CD4-positive, alpha-beta memory T cell (primary cell): ENCODE measurements at regions of chr22 and their contacts with region 1.

Region 1: DNA sequence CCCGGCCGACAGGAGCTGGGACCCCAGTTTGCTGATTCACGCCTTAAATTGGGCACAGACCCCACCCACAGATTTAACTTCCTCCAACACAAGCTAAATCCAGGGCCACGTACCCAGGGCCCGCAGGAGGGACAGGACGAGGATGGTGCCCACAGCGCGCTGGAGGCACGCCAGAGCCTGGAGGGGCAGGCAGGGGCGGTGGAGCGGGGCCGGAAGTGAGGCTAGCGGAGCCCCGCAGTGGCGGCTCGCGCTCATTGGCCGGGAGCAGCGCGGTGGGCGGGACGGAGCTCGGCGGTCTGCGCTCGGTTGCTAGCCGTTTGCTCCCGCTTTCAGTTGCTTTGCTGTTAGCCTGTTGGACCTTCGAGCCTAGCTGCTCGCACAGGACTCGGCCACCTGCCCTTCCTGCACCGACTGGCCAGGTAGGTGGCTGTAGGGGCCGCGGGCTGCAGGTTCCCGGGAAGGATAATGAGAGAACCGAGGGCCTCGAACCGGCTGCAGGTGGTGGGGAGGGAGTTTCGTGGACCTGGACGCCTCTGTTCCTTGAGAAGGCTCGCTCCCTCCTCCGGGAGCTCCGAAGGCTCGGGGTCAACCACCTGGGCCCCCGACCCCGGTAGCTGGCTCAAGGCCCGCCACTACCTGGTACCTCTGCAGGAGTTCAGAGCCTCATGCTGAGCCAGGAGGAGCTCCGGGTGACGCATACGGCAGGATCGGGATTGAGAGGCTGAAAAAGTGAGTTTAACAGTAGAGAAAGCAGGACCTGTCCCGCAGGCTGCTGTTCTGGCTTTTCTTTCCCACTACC is at the start of gene CCDC134:
- DNase-seq: peak; percentile 89 to 93 (median 93)
- H3K4me3 ChIP-seq: peak within 1 kb of the TSS; percentile 91 to 92
- H3K4me3 Mint-ChIP-seq: peak within 1 kb of the TSS; percentile 91 to 98 (median 96)
- H3K27ac ChIP-seq: peak within 1 kb of the TSS; percentile 85
- H3K27ac Mint-ChIP-seq: peak within 1 kb of the TSS; percentile 90 to 99 (median 98)
- H3K4me1 ChIP-seq: peaks cover 37% of the 10 kb centered on the region
- H3K4me1 Mint-ChIP-seq: peaks cover 20 to 53% (median 34%) of the 10 kb centered on the region in 4 donors
- H3K27me3 ChIP-seq: no peaks in the 10 kb centered on the region
- H3K27me3 Mint-ChIP-seq: no peaks in the 10 kb centered on the region
- total RNA-seq, gene CCDC134: 23.2 to 27.8 TPM

Region 2: DNA sequence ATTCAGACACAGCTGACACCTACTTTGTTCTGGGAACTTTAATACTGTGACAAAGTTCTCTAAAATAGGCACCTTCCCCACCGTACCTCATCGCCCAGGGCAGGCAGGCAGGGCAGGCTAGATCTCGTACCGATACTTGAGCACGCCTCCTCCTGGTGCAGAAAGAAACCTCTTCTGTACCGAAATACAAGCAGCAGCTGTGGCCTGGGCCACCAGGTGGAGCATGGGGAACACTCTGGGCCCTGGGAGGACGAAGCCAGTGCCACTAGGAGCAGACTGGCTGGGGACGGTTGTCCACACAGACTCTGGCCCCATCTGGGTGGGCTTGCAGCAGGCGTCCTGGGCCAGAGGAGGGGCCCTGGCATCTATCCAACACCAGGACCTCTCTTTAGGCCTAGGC is 223.7 kb before region 1 on chr22:
- CTCF ChIA-PET with region 1: no interaction called
- POLR2A ChIA-PET with region 1: no interaction called
- intact Hi-C with region 1: no loop called
- DNase-seq: peak in 4 of 5 donors; percentile 9 to 34 (median 21)
- H3K4me3 ChIP-seq: no peak overlapping the region
- H3K4me3 Mint-ChIP-seq: no peak overlapping the region
- H3K27ac ChIP-seq: no peak overlapping the region
- H3K27ac Mint-ChIP-seq: peak overlapping the region in 1 of 7 donors; percentile 37
- H3K4me1 ChIP-seq: no peaks in the 10 kb centered on the region
- H3K4me1 Mint-ChIP-seq: no peaks in the 10 kb centered on the region
- H3K27me3 ChIP-seq: no peaks in the 10 kb centered on the region
- H3K27me3 Mint-ChIP-seq: no peaks in the 10 kb centered on the region

Region 3: GRCh38 chr22:41688365-41689211 is 112.0 kb before region 1 on chr22 and contains the start of gene SNU13:
- CTCF ChIA-PET with region 1: no interaction called
- POLR2A ChIA-PET with region 1: interaction called, 35 read pairs
- intact Hi-C with region 1: no loop called
- DNase-seq: peak; percentile 91 to 95 (median 92)
- H3K4me3 ChIP-seq: peak within 1 kb of the TSS; percentile 75 to 96
- H3K4me3 Mint-ChIP-seq: peak within 1 kb of the TSS; percentile 94 to 99 (median 97)
- H3K27ac ChIP-seq: peak within 1 kb of the TSS; percentile 95
- H3K27ac Mint-ChIP-seq: peak within 1 kb of the TSS; percentile 95 to 99 (median 98)
- H3K4me1 ChIP-seq: peaks cover 37% of the 10 kb centered on the region
- H3K4me1 Mint-ChIP-seq: peaks cover 21 to 48% (median 33%) of the 10 kb centered on the region in 4 donors
- H3K27me3 ChIP-seq: no peaks in the 10 kb centered on the region
- H3K27me3 Mint-ChIP-seq: no peaks in the 10 kb centered on the region
- total RNA-seq, gene SNU13: 123 to 129 TPM

Region 4: DNA sequence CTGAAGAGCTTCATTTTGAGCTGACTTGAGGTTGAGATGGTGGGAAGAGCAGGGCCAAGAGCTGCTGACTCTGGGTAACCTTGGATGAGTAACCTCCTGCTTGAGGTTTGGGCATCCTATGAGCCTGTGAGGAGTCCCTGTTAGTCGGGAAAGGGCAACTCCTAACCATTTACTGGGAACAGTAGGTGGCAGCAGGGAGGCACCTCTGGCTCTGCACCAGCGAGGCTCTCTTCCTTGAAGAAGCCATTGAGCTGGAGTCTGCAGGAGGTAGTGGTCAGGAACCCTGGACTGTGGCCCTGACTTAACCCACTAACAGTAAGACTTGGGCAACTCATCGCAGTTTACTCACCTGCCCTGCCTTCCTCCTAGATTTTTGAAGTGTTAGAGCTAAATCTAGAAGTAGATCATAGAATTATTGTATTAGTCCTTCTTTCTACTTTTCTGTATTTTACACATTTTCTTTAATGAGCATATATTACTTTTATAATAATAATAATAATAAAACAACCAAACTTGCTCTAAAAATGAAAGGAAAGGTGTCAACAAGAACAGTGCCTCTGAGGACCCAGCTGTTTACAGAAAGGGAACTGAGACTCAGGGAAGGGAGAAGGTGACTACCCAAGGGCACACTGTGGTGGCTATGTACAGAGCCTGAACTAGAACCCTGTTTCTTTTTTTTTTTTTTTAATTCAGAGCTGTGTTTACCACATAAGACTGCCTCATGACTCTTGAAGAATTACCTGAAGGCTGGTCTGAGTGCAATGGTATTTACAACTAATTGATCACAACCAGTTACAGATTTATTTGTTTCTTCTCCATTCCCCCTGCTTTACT is 53.8 kb before region 1 on chr22:
- CTCF ChIA-PET with region 1: interaction called, 46 read pairs
- POLR2A ChIA-PET with region 1: interaction called, 25 read pairs
- intact Hi-C with region 1: loop called (anchors 1 kb)
- DNase-seq: peak; percentile 48 to 66 (median 51)
- H3K4me3 ChIP-seq: no peak overlapping the region
- H3K4me3 Mint-ChIP-seq: no peak overlapping the region
- H3K27ac ChIP-seq: no peak overlapping the region
- H3K27ac Mint-ChIP-seq: peak overlapping the region in 1 of 7 donors; percentile 2
- H3K4me1 ChIP-seq: no peaks in the 10 kb centered on the region
- H3K4me1 Mint-ChIP-seq: peaks cover 0 to 5% (median 1%) of the 10 kb centered on the region in 4 donors
- H3K27me3 ChIP-seq: no peaks in the 10 kb centered on the region
- H3K27me3 Mint-ChIP-seq: peaks cover 0 to 2% of the 10 kb centered on the region in 2 donors

Region 5: GRCh38 chr22:41786418-41786817 is 14.1 kb before region 1 on chr22:
- CTCF ChIA-PET with region 1: interaction called, 71 read pairs
- POLR2A ChIA-PET with region 1: interaction called, 584 read pairs
- intact Hi-C with region 1: loop called (anchors 1 kb)
- DNase-seq: no peak
- H3K4me3 ChIP-seq: no peak overlapping the region
- H3K4me3 Mint-ChIP-seq: no peak overlapping the region
- H3K27ac ChIP-seq: no peak overlapping the region
- H3K27ac Mint-ChIP-seq: peak overlapping the region in 2 of 7 donors; percentile 27 to 77
- H3K4me1 ChIP-seq: peaks cover 59% of the 10 kb centered on the region
- H3K4me1 Mint-ChIP-seq: peaks cover 29 to 66% (median 41%) of the 10 kb centered on the region in 4 donors
- H3K27me3 ChIP-seq: no peaks in the 10 kb centered on the region
- H3K27me3 Mint-ChIP-seq: no peaks in the 10 kb centered on the region

Region 6: DNA sequence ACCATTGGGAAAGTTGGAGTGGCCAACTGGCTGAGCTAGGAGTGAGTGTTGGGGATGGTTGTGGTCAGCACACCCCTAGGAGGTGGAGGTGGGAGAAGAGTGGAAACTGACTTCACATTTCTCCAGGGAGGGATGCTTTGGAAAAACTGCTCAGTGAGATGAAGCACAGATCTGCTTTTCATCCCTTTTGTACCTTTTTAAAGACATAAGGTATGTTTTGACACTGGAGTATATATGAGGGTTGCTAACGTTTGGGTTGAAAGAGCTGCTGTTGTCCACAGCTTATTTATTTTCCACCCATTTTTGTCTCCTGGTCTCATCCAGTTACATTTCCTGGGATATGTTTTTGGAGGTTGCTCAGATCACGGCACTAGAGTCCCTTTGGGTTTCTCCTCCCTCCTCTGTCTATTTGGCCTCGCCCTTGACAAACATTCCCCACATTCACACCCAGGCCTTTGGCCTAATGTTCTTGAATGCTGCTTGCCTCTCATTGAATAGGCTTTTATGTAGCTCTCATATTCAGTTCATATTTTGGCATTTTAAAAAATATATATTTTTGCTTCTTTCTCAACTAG is 40.6 kb after region 1 on chr22:
- CTCF ChIA-PET with region 1: no interaction called
- POLR2A ChIA-PET with region 1: interaction called, 98 read pairs
- intact Hi-C with region 1: no loop called
- DNase-seq: no peak
- H3K4me3 ChIP-seq: no peak overlapping the region
- H3K4me3 Mint-ChIP-seq: no peak overlapping the region
- H3K27ac ChIP-seq: no peak overlapping the region
- H3K27ac Mint-ChIP-seq: peak overlapping the region in 2 of 7 donors; percentile 24 to 33
- H3K4me1 ChIP-seq: peaks cover 63% of the 10 kb centered on the region
- H3K4me1 Mint-ChIP-seq: peaks cover 57 to 82% (median 68%) of the 10 kb centered on the region in 4 donors
- H3K27me3 ChIP-seq: no peaks in the 10 kb centered on the region
- H3K27me3 Mint-ChIP-seq: no peaks in the 10 kb centered on the region

Region 7: DNA sequence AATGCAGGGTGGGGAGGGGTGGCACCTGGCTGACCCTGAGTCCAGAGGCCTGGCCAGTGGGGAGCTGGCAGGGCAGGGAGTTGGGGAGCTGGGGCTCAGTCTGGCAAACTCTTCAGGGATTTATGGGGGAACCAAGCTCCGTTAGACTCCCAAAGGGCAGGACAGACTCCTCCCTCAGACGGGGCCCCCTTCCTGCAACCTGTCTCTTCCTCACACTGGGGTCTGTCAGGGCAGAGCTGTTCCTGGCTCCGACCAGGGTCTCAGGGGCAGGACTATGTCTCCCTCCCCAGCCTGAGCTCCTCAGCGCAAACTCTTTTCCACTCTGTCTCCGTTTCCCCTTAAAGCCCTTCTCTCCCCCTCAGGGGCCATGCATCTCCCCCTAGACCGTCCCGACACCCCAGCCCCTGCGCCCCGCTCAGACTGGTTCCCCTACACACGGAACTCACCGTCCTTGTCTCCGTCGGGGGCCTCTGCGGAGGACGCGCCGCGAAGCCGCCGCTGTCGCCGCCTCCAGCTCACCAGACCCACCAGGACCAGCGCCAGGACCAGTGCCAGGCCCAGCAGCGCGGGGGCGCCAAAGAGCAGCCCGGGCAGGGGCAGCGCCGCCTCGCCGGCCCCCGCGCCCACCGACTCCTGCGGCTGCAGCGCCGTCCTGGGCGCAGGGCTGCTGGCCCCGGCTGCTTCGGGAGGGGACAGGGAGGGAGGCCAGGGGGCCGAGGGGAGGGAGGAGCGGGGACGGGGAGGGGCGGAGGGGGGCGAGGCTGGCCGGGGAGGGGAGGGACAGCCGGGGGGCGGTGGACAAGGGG is 125.3 kb after region 1 on chr22:
- CTCF ChIA-PET with region 1: interaction called, 4 read pairs
- POLR2A ChIA-PET with region 1: interaction called, 13 read pairs
- intact Hi-C with region 1: no loop called
- DNase-seq: peak; percentile 73 to 82 (median 77)
- H3K4me3 ChIP-seq: peak overlapping the region in 1 of 2 donors; percentile 43
- H3K4me3 Mint-ChIP-seq: peak overlapping the region; percentile 73 to 87 (median 82)
- H3K27ac ChIP-seq: no peak overlapping the region
- H3K27ac Mint-ChIP-seq: peak overlapping the region; percentile 57 to 83 (median 71)
- H3K4me1 ChIP-seq: peaks cover 15% of the 10 kb centered on the region
- H3K4me1 Mint-ChIP-seq: peaks cover 3 to 25% (median 9%) of the 10 kb centered on the region in 4 donors
- H3K27me3 ChIP-seq: no peaks in the 10 kb centered on the region
- H3K27me3 Mint-ChIP-seq: no peaks in the 10 kb centered on the region

Region 8: DNA sequence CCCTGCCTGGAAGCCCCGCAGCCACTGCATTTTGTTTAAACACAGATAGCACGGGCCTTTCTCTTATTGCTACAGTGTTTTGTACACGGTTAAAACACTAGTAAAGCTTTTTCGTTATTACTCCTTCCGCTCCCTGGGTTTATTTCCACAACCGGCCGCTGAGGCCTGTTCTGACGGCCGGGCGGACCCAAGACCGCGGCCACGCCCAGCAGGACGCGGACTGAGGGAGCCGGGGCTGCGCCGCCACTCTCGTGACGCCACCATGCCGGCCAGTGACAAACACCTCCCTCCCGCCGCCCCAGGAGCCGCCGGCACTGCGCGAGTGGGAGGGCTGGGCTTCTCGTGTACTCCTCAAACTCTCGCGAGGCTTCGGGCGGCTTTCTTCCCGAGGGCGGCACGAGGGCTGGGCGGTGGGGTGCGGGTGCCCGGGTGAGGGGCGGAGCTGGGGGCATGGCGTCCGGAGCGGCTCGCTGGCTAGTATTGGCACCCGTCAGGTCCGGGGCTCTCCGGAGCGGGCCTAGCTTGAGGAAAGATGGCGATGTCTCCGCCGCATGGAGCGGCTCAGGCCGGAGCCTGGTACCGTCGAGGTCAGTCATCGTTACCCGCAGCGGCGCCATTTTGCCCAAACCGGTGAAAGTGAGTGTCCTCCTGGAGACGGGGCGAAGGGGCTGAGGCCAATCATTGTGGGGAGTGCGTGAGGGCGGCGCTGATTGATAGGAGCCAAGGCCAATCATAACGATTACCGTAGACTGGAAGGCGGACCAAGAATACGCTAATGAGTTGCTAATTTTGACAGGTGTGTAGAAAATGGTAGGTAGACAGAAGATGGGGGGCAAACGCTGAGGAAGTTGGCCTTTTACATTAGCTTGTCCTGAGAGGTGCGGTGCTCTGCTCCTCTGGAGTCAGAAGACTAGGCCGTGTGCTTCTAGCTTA is 279.0 kb after region 1 on chr22 and contains the start of gene SMDT1:
- CTCF ChIA-PET with region 1: no interaction called
- POLR2A ChIA-PET with region 1: interaction called, 13 read pairs
- intact Hi-C with region 1: no loop called
- DNase-seq: peak; percentile 98 to 99 (median 99)
- H3K4me3 ChIP-seq: peak within 1 kb of the TSS; percentile 70 to 78
- H3K4me3 Mint-ChIP-seq: peak within 1 kb of the TSS; percentile 88 to 98 (median 96)
- H3K27ac ChIP-seq: peak within 1 kb of the TSS; percentile 97
- H3K27ac Mint-ChIP-seq: peak within 1 kb of the TSS; percentile 93 to 100 (median 99)
- H3K4me1 ChIP-seq: peaks cover 38% of the 10 kb centered on the region
- H3K4me1 Mint-ChIP-seq: peaks cover 19 to 58% (median 38%) of the 10 kb centered on the region in 4 donors
- H3K27me3 ChIP-seq: no peaks in the 10 kb centered on the region
- H3K27me3 Mint-ChIP-seq: no peaks in the 10 kb centered on the region
- total RNA-seq, gene SMDT1: 101 to 105 TPM